ENCODE measurements at regions of chr4 and their contacts with region 1.

Region 1: DNA sequence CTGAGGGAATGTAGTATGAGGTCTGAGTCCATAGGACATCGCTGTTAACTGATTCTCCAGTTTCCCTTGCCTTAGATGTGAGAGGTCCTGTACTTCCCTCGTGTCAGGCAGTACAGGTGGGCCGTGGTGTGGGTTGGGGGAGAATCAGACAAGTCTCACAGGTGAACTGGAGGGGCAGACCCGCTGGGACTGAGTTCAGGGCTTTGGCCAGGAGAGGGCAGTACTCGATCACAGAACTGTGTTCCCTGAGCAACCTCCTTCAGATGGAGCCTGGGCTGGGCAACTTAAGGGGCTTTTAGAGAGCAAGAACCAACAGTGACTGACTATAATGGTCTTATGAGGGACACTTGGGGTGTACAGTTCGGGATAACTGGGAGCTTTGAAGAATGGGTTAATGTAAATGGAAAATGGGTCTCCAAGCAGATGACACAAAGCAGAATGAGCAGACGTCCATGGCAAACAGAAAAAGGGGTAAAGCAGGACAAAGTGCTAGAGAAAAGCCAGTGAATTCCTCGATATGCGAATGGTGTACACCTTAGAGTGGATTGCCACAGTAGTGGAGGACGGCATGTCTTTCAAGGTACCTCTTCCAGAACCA is 83.6 kb downstream of the CCNG2 start:
- DNase-seq: peak; percentile 46
- ATAC-seq: peak; percentile 56
- H3K4me3 Mint-ChIP-seq: no peak overlapping the region
- H3K27ac Mint-ChIP-seq: no peak overlapping the region
- H3K4me1 Mint-ChIP-seq: no peaks in the 10 kb centered on the region
- H3K27me3 Mint-ChIP-seq: no peaks in the 10 kb centered on the region
- CTCF ChIP-seq: no peak

Region 2: GRCh38 chr4:77263247-77263646 is 22.7 kb after region 1 on chr4:
- CTCF ChIA-PET with region 1: no interaction called
- POLR2A ChIA-PET with region 1: no interaction called
- intact Hi-C with region 1: no loop called
- DNase-seq: no peak
- ATAC-seq: no peak
- H3K4me3 Mint-ChIP-seq: no peak overlapping the region
- H3K27ac Mint-ChIP-seq: no peak overlapping the region
- H3K4me1 Mint-ChIP-seq: no peaks in the 10 kb centered on the region
- H3K27me3 Mint-ChIP-seq: no peaks in the 10 kb centered on the region
- CTCF ChIP-seq: no peak

Region 3: GRCh38 chr4:77308843-77309242 is 68.3 kb after region 1 on chr4:
- CTCF ChIA-PET with region 1: no interaction called
- POLR2A ChIA-PET with region 1: no interaction called
- intact Hi-C with region 1: loop called (anchors 2 kb)
- DNase-seq: no peak
- ATAC-seq: peak; percentile 40
- H3K4me3 Mint-ChIP-seq: no peak overlapping the region
- H3K27ac Mint-ChIP-seq: no peak overlapping the region
- H3K4me1 Mint-ChIP-seq: no peaks in the 10 kb centered on the region
- H3K27me3 Mint-ChIP-seq: no peaks in the 10 kb centered on the region
- CTCF ChIP-seq: no peak

Region 4: DNA sequence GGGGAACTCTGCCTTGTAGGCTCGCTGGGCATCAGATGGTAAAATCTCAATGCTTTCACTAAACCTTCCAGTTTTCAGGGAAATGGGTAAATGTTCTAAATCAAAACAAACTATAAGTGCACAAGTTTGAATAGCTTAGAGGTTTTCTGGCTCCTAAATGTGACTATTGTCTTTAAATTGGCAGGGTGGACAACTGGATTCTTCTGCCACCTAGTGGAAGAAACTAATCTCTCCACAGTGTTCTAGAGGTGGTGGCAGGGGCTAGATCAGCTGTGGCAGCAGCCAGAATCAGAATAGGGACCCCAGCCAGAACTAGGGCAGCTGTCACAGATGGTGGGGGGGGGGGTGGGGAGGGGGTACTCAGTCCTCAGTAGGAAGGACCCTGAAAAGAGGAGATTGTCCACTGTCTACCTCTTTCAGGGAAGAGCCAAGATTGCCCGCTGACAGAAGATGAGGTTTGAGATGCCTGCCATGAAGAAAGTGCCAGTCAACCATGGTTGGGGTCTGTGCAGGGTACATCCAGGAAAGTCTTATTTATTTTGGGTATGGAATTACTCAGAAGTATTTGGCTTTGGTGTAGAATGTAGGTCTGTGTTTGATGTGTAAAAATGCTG is 117.9 kb after region 1 on chr4:
- CTCF ChIA-PET with region 1: interaction called, 15 read pairs
- POLR2A ChIA-PET with region 1: no interaction called
- intact Hi-C with region 1: loop called (anchors 1 kb)
- DNase-seq: no peak
- ATAC-seq: no peak
- H3K4me3 Mint-ChIP-seq: no peak overlapping the region
- H3K27ac Mint-ChIP-seq: no peak overlapping the region
- H3K4me1 Mint-ChIP-seq: peaks cover 17% of the 10 kb centered on the region
- H3K27me3 Mint-ChIP-seq: peaks cover 3% of the 10 kb centered on the region
- CTCF ChIP-seq: no peak

Region 5: DNA sequence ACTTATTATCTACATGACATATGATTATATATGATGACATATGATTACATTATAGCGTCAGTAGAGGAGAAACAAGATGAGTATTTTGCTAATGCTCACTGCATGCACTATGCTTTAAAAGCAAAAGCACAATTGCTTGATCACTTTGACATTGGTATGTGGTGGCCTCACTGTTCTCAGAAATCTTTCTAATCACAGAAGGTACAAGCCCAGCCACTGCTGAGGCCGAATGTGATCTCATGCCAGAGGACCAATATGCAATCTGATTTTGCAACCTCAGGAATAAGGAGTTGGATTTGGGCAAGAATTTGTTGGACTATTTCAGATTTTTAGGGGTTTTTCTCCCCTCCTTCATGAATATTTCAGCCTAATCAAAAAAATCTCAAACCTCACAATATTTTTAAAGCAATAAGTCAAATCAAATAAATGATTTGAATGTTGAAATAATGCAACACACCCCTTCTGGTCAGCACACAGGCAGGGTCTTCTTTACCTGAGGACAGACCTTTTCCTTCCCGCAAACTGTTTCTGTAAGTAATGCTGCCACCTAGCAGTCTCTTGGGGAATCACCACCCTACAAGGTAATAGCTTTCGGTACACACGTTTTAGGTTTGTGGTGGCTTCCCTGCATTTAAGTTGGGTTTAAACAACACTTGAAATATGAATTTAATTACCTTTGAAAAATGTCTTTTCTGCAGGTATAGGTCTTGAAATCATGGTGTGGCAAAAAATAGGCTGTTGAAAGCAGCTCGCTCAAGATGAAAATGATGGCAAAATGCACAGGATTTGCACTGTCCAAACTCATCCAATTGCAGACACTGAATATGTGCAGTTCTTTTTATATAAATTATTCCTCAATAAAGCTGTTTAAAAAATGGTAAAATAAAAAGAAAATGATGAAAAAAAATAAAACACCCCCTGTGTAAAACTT is 360.2 kb after region 1 on chr4:
- CTCF ChIA-PET with region 1: no interaction called
- POLR2A ChIA-PET with region 1: no interaction called
- intact Hi-C with region 1: loop called (anchors 1 kb)
- DNase-seq: no peak
- ATAC-seq: peak; percentile 47
- H3K4me3 Mint-ChIP-seq: no peak overlapping the region
- H3K27ac Mint-ChIP-seq: no peak overlapping the region
- H3K4me1 Mint-ChIP-seq: no peaks in the 10 kb centered on the region
- H3K27me3 Mint-ChIP-seq: peaks cover 4% of the 10 kb centered on the region
- CTCF ChIP-seq: peak; percentile 53